Activated CD4-positive, alpha-beta memory T cell treated with anti-CD3 and anti-CD28 coated beads for 36 hours (primary cell): ENCODE measurements at regions of chr9 and their contacts with region 1.

Region 1: GRCh38 chr9:72592502-72593403 is 71.3 kb downstream of the TMC1 start:
- DNase-seq: peak; percentile 30
- H3K4me3 Mint-ChIP-seq: no peak overlapping the region
- H3K27ac Mint-ChIP-seq: no peak overlapping the region
- H3K4me1 Mint-ChIP-seq: peaks cover 28% of the 10 kb centered on the region
- H3K27me3 Mint-ChIP-seq: no peaks in the 10 kb centered on the region

Region 2: GRCh38 chr9:72292256-72292682 is 300.5 kb before region 1 on chr9:
- CTCF ChIA-PET with region 1: interaction called, 27 read pairs
- POLR2A ChIA-PET with region 1: no interaction called
- intact Hi-C with region 1: loop called (anchors 1 kb)
- DNase-seq: no peak
- H3K4me3 Mint-ChIP-seq: no peak overlapping the region
- H3K27ac Mint-ChIP-seq: no peak overlapping the region
- H3K4me1 Mint-ChIP-seq: no peaks in the 10 kb centered on the region
- H3K27me3 Mint-ChIP-seq: peaks cover 7% of the 10 kb centered on the region

Region 3: DNA sequence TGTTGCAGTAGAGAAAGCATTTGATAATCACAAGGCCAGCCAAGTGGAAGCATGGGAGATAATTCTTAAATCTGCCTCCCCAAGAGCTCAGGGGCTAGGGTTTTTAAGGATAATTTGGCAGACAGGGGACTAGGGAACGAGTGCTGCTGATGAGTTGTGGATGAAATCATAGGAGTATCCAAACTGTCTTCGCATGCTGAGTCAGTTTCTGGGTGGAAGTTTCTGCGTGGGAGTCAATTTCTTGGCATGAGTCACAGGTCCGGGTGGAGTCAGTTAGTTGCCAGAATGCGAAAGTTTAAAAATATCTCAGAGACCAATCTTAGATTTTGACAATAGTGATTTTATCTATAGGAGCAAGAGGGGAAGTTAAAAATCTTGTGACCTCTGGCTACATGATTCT is 41.2 kb after region 1 on chr9:
- CTCF ChIA-PET with region 1: no interaction called
- POLR2A ChIA-PET with region 1: no interaction called
- intact Hi-C with region 1: no loop called
- DNase-seq: peak; percentile 72
- H3K4me3 Mint-ChIP-seq: no peak overlapping the region
- H3K27ac Mint-ChIP-seq: no peak overlapping the region
- H3K4me1 Mint-ChIP-seq: peaks cover 14% of the 10 kb centered on the region
- H3K27me3 Mint-ChIP-seq: peaks cover 5% of the 10 kb centered on the region

Region 4: GRCh38 chr9:72734631-72735030 is 141.9 kb after region 1 on chr9:
- CTCF ChIA-PET with region 1: no interaction called
- POLR2A ChIA-PET with region 1: no interaction called
- intact Hi-C with region 1: no loop called
- DNase-seq: no peak
- H3K4me3 Mint-ChIP-seq: no peak overlapping the region
- H3K27ac Mint-ChIP-seq: no peak overlapping the region
- H3K4me1 Mint-ChIP-seq: no peaks in the 10 kb centered on the region
- H3K27me3 Mint-ChIP-seq: peaks cover 3% of the 10 kb centered on the region